ENCODE measurements at regions of chr5 and their contacts with region 1.

Region 1: GRCh38 chr5:112146323-112147226 is 272.5 kb downstream of the EPB41L4A start:
- DNase-seq: peak; percentile 51
- H3K4me3 ChIP-seq: no peak overlapping the region
- H3K27ac ChIP-seq: no peak overlapping the region
- H3K4me1 ChIP-seq: no peaks in the 10 kb centered on the region
- H3K27me3 ChIP-seq: no peaks in the 10 kb centered on the region
- CTCF ChIP-seq: peak; percentile 75 to 87 (median 82)
- EP300 ChIP-seq: no peak
- POLR2A ChIP-seq: no peak

Region 2: GRCh38 chr5:111158105-111158744 is 988.4 kb before region 1 on chr5:
- in situ Hi-C with region 1: loop called in 1 of 4 experiments (anchors 10 kb)
- intact Hi-C with region 1: no loop called
- DNase-seq: peak; percentile 68
- H3K4me3 ChIP-seq: no peak overlapping the region
- H3K27ac ChIP-seq: no peak overlapping the region
- H3K4me1 ChIP-seq: peaks cover 0 to 3% (median 0%) of the 10 kb centered on the region in 4 donors
- H3K27me3 ChIP-seq: no peaks in the 10 kb centered on the region
- CTCF ChIP-seq: peak; percentile 94 to 100 (median 99)
- EP300 ChIP-seq: no peak
- POLR2A ChIP-seq: no peak

Region 3: DNA sequence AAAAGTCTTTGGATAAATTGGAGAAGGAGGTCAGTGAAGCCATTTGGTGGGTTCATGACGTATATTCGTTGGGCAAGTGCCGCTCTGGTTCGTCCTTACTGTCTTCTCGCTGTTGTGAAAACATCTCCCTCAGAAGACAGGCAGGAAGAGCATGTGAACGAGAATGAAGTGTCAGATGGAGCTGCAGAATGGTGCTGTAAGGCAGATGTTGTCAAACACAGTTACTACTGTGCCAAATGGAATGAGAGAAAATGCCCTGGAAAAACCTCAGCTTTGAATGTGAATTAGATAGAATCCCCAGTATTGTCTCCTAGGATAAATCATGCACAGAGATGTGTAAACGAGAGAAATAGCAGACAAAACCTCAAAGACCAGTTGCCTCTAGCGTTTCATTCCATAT is 800.8 kb before region 1 on chr5:
- in situ Hi-C with region 1: no loop called
- intact Hi-C with region 1: no loop called
- DNase-seq: no peak
- H3K4me3 ChIP-seq: no peak overlapping the region
- H3K27ac ChIP-seq: no peak overlapping the region
- H3K4me1 ChIP-seq: no peaks in the 10 kb centered on the region
- H3K27me3 ChIP-seq: no peaks in the 10 kb centered on the region
- CTCF ChIP-seq: no peak
- EP300 ChIP-seq: no peak
- POLR2A ChIP-seq: no peak

Region 4: DNA sequence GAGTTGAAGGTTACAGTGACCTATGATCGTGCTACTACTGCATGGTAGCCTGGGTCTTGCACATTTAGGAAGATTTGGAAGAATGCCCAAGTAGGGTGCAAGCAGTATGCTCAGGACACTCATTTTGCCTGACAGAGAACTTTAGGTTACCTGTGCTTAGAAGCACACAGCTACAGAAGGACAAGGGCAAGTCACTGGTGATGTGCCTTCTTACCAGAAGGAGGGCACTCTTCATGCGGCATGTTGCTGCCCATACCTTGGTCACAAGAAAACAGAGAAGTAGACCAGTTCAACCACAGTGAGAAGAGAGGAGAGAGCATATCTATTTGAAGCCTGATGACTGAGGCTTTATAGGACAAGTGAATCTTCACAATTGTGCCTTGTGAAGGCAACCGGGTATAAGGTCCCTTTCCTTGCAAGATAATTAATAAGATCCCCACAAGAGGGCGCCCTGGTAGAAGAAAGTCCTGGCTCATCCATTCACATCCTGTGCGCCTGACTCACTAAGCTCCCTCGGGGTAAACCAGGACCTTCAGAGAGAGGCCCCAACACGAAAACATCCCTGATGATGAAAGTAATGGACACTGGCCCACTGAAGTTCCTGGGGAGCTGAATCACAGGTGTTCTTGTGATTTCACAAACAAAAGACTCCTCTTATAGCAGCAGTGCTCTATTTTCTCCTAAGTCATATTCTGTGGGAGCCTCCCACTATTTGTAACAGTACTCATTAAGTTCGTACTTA is 596.1 kb before region 1 on chr5:
- in situ Hi-C with region 1: loop called (anchors 5 to 10 kb)
- intact Hi-C with region 1: loop called (anchors 5 kb)
- DNase-seq: peak; percentile 72
- H3K4me3 ChIP-seq: no peak overlapping the region
- H3K27ac ChIP-seq: peak overlapping the region in 1 of 4 donors; percentile 34
- H3K4me1 ChIP-seq: peaks cover 0 to 14% (median 0%) of the 10 kb centered on the region in 4 donors
- H3K27me3 ChIP-seq: no peaks in the 10 kb centered on the region
- CTCF ChIP-seq: peak; percentile 59 to 69 (median 64)
- EP300 ChIP-seq: no peak
- POLR2A ChIP-seq: no peak

Region 5: DNA sequence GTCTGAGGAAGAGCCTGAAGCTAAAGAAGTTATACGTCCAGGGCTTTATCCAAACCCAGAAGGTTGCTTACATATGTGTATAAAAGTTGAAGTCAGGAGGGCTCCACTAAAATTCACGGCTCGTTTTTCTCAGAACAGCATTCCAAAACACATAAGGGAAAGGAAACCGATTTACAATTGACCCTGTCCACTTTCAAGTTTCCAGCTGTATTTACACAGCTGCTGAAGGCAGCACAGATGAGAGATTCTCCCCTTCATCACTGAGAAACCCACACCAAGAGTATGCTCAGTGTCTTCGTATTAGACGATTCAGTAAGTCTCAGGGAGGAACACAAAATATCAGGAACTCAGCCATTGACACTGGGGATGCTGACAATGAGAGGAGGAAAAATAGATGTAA is 383.7 kb before region 1 on chr5:
- in situ Hi-C with region 1: no loop called
- intact Hi-C with region 1: loop called (anchors 10 kb)
- DNase-seq: no peak
- H3K4me3 ChIP-seq: no peak overlapping the region
- H3K27ac ChIP-seq: no peak overlapping the region
- H3K4me1 ChIP-seq: peaks cover 0 to 8% (median 6%) of the 10 kb centered on the region in 4 donors
- H3K27me3 ChIP-seq: no peaks in the 10 kb centered on the region
- CTCF ChIP-seq: no peak
- EP300 ChIP-seq: no peak
- POLR2A ChIP-seq: no peak

Region 6: GRCh38 chr5:111781200-111781599 is 365.4 kb before region 1 on chr5:
- in situ Hi-C with region 1: loop called in 2 of 4 experiments (anchors 25 kb)
- intact Hi-C with region 1: no loop called
- DNase-seq: peak; percentile 13
- H3K4me3 ChIP-seq: no peak overlapping the region
- H3K27ac ChIP-seq: no peak overlapping the region
- H3K4me1 ChIP-seq: peaks cover 0 to 5% (median 0%) of the 10 kb centered on the region in 4 donors
- H3K27me3 ChIP-seq: no peaks in the 10 kb centered on the region
- CTCF ChIP-seq: no peak
- EP300 ChIP-seq: no peak
- POLR2A ChIP-seq: no peak